Transverse colon (tissue), 4 donors: ENCODE measurements at regions of chr13 and their contacts with region 1.

Region 1: DNA sequence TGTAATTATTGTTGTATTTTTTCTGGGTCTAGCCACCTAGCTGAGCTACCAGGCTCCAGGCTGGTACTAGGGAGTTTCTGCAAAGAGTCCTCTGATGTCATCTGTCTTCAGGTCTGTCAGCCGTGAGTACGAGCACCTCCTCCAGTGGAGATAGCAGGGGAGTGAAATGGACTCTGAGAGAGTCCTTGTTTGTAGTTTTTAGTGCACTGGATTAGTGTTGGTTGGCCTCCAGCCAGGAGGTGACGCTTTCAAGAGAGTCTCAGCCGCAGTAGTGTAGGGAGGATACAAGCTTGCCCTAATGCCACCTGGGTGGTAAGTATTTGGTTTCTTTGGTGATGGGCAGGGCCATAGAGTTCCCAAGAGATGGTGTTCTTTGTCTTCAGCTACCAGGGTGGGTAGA is 384.8 kb downstream of the SLC7A1 start:
- DNase-seq: no peak
- H3K4me3 ChIP-seq: no peak overlapping the region
- H3K27ac ChIP-seq: no peak overlapping the region
- H3K4me1 ChIP-seq: no peaks in the 10 kb centered on the region
- H3K27me3 ChIP-seq: no peaks in the 10 kb centered on the region
- CTCF ChIP-seq: no peak
- EP300 ChIP-seq: no peak
- POLR2A ChIP-seq: no peak

Region 2: GRCh38 chr13:29266261-29266660 is 55.6 kb after region 1 on chr13:
- in situ Hi-C with region 1: no loop called
- intact Hi-C with region 1: no loop called
- DNase-seq: no peak
- H3K4me3 ChIP-seq: no peak overlapping the region
- H3K27ac ChIP-seq: no peak overlapping the region
- H3K4me1 ChIP-seq: no peaks in the 10 kb centered on the region
- H3K27me3 ChIP-seq: no peaks in the 10 kb centered on the region
- CTCF ChIP-seq: no peak
- EP300 ChIP-seq: no peak
- POLR2A ChIP-seq: no peak

Region 3: GRCh38 chr13:29354377-29354776 is 143.7 kb after region 1 on chr13:
- in situ Hi-C with region 1: loop called in 1 of 4 experiments (anchors 5 kb)
- intact Hi-C with region 1: no loop called
- DNase-seq: no peak
- H3K4me3 ChIP-seq: no peak overlapping the region
- H3K27ac ChIP-seq: no peak overlapping the region
- H3K4me1 ChIP-seq: no peaks in the 10 kb centered on the region
- H3K27me3 ChIP-seq: no peaks in the 10 kb centered on the region
- CTCF ChIP-seq: no peak
- EP300 ChIP-seq: no peak
- POLR2A ChIP-seq: no peak